Upper lobe of right lung (tissue), 1 donor: ENCODE measurements at regions of chr1 and their contacts with region 1.

Region 1: GRCh38 chr1:204363335-204364124 is 3.8 kb upstream of the PLEKHA6 start:
- DNase-seq: peak; percentile 88
- ATAC-seq: peak; percentile 92
- H3K4me3 ChIP-seq: peak overlapping the region; percentile 53
- H3K27ac ChIP-seq: peak overlapping the region; percentile 12
- H3K4me1 ChIP-seq: peaks cover 19% of the 10 kb centered on the region
- H3K27me3 ChIP-seq: no peaks in the 10 kb centered on the region
- CTCF ChIP-seq: peak; percentile 97

Region 2: DNA sequence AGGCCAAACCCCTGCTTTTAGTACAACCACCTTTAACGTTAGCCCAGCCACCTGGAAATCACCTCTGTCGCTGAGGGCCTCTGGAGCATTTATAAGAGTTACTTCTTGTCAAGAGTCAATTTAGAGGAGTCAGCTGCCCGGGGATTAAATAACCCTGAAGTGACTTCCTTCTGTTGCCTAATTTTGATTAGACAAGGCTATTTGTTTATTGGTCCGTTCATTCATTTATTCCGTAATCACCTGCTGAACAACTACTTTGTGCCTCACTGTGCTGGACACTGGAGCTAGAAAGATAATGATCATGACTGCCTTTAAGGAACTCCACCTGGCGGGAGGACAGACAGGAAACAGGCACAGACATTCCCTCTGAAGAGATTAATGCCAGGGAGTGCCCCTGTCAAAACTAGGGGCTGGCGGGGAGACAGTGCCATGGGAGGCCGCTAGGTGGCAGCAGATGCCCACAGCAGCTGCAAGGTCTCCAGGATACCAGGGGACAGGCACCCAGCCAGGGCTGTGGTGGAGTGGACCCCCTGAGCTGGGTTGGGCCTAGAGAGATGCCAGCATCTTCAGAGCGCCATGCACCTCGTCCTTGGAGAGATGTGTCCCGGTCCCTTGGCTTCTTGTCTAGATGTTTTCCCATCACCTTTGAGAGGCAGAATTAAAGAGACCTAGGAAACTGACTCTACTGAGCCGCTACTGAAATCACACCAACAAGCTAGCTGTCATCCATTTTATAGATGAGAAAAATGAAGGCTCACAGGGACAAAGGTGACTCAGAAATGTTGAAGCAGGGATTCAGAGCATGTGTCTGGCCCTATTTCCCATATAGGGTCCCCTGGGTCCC is 201.1 kb before region 1 on chr1:
- intact Hi-C with region 1: loop called (anchors 10 kb)
- DNase-seq: peak; percentile 90
- ATAC-seq: peak; percentile 93
- H3K4me3 ChIP-seq: no peak overlapping the region
- H3K27ac ChIP-seq: no peak overlapping the region
- H3K4me1 ChIP-seq: peaks cover 6% of the 10 kb centered on the region
- H3K27me3 ChIP-seq: no peaks in the 10 kb centered on the region
- CTCF ChIP-seq: peak; percentile 100

Region 3: GRCh38 chr1:204213668-204214662 is 149.6 kb before region 1 on chr1 and contains the start of gene GOLT1A:
- intact Hi-C with region 1: loop called (anchors 5 kb)
- DNase-seq: peak; percentile 94
- ATAC-seq: peak; percentile 96
- H3K4me3 ChIP-seq: peak within 1 kb of the TSS; percentile 46
- H3K27ac ChIP-seq: no peak within 1 kb of the TSS
- H3K4me1 ChIP-seq: no peaks in the 10 kb centered on the region
- H3K27me3 ChIP-seq: no peaks in the 10 kb centered on the region
- CTCF ChIP-seq: peak; percentile 62
- total RNA-seq, gene GOLT1A: 22.4 TPM

Region 4: GRCh38 chr1:204257954-204258752 is 105.4 kb before region 1 on chr1:
- intact Hi-C with region 1: loop called (anchors 10 kb)
- DNase-seq: peak; percentile 79
- ATAC-seq: peak; percentile 80
- H3K4me3 ChIP-seq: no peak overlapping the region
- H3K27ac ChIP-seq: no peak overlapping the region
- H3K4me1 ChIP-seq: no peaks in the 10 kb centered on the region
- H3K27me3 ChIP-seq: no peaks in the 10 kb centered on the region
- CTCF ChIP-seq: peak; percentile 73